ENCODE measurements at regions of chr11 and their contacts with region 1.

Region 1: DNA sequence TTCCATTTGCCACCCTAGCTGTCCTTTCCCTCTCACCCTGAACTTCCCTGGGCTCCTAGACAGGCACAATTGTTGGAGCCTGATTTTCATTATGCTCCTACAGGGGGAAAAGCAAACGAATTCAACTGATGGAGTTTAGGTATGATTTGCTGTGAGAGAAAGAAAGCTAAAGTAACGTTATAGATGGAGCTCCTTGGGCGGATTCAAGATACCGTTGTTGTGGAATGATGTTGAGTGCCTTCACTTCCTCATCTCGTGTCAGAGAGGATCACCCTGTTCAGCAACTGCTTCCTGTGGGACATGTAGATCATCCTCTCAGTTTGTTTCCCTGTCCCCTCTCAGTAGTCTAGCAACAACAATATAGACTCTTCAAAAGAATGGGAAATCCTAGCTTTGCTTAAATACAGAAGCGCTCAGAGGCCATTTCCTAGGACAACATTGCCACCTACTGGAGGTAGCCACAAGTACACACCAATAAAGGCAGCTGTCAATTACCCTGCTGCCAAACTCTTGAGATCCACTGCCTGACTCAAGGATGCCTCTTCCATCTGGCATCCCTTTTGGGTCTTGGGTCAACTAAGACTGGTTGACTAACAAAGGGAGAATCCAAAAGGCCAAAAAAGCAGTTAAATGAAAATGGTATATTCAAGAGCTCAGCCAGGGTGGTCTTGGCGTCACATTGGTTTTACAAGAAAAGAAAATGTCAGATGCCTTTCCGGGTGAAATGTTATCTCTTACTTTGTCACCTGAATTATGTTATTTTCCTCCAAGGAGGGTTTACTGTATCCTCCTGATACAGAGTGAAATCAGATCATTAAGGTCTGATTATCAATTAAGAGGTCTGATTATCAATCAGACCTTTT is 13.5 kb upstream of the DTX4 start:
- DNase-seq: peak in 8 of 9 donors; percentile 53 to 75 (median 70)
- ATAC-seq: peak; percentile 97
- H3K4me3 ChIP-seq: no peak overlapping the region
- H3K4me3 Mint-ChIP-seq: peak overlapping the region in 1 of 10 donors; percentile 18
- H3K27ac ChIP-seq: no peak overlapping the region
- H3K27ac Mint-ChIP-seq: peak overlapping the region in 7 of 9 donors; percentile 8 to 65 (median 50)
- H3K4me1 ChIP-seq: no peaks in the 10 kb centered on the region
- H3K4me1 Mint-ChIP-seq: peaks cover 4 to 16% (median 5%) of the 10 kb centered on the region in 7 donors
- H3K27me3 ChIP-seq: no peaks in the 10 kb centered on the region
- H3K27me3 Mint-ChIP-seq: peaks cover 9 to 14% (median 9%) of the 10 kb centered on the region in 5 donors

Region 2: DNA sequence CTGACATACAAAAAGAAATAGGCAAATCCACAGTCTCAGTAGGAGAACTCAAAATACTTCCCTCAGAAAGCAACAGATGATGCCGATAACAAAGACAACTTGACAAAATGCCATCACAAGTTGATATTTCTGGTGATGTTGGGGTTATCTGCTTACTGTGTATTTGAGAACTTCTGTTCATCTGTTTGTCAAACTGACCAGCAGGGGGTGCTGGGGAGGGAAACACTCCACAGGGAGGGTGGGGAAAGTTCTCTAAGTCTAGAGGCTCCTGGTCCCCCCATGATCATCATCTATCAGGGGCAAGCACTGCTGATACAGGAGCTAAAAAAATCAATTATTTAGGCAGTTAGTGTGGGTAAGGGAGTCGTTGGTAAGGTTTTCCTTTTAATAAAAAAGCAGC is 199.9 kb before region 1 on chr11:
- CTCF ChIA-PET with region 1: interaction called, 3 read pairs
- POLR2A ChIA-PET with region 1: no interaction called
- intact Hi-C with region 1: loop called in 1 of 2 experiments (anchors 1 kb)
- DNase-seq: peak in 6 of 9 donors; percentile 4 to 18 (median 8)
- ATAC-seq: peak; percentile 60
- H3K4me3 ChIP-seq: no peak overlapping the region
- H3K4me3 Mint-ChIP-seq: no peak overlapping the region
- H3K27ac ChIP-seq: no peak overlapping the region
- H3K27ac Mint-ChIP-seq: no peak overlapping the region
- H3K4me1 ChIP-seq: no peaks in the 10 kb centered on the region
- H3K4me1 Mint-ChIP-seq: peaks cover 0 to 2% (median 0%) of the 10 kb centered on the region in 7 donors
- H3K27me3 ChIP-seq: no peaks in the 10 kb centered on the region
- H3K27me3 Mint-ChIP-seq: peaks cover 0 to 21% (median 8%) of the 10 kb centered on the region in 5 donors

Region 3: DNA sequence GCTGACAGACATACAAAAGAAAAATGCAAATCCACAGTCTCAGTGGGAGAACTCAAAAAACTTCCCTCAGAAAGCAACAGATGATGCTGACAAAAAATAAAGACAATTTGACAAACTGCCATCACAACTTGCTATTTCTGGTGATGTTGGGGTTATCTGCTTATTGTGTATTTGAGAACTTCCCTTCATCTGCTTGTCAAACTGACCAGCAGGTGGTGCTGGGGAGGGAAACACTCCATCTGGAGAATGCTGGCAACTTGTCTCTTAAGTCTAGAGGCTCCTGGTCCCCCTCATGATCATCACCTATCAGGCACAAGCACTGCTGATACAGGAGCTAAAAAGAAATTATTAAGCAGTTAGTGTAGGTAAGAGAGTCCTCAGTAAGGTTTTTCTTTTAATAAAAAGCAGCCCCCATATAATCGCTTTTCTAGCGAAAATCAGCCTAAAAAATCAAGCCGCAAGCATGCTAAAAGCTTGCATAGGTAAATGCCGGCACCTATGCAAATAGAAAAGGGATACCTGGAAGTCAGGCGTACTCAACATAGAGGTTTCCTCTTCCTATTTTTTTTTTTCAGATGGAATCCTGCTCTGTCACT is 61.2 kb before region 1 on chr11:
- CTCF ChIA-PET with region 1: interaction called, 8 read pairs
- POLR2A ChIA-PET with region 1: no interaction called
- intact Hi-C with region 1: loop called (anchors 1 kb)
- DNase-seq: peak; percentile 31 to 66 (median 58)
- ATAC-seq: peak; percentile 84
- H3K4me3 ChIP-seq: no peak overlapping the region
- H3K4me3 Mint-ChIP-seq: no peak overlapping the region
- H3K27ac ChIP-seq: no peak overlapping the region
- H3K27ac Mint-ChIP-seq: no peak overlapping the region
- H3K4me1 ChIP-seq: no peaks in the 10 kb centered on the region
- H3K4me1 Mint-ChIP-seq: peaks cover 0 to 11% (median 6%) of the 10 kb centered on the region in 7 donors
- H3K27me3 ChIP-seq: no peaks in the 10 kb centered on the region
- H3K27me3 Mint-ChIP-seq: peaks cover 26 to 44% (median 34%) of the 10 kb centered on the region in 5 donors

Measured in naive thymus-derived CD4-positive, alpha-beta T cell (primary cell).